ENCODE measurements at regions of chr7 and their contacts with region 1.

Region 1: GRCh38 chr7:103344453-103345149 is at the start of gene DNAJC2:
- DNase-seq: peak; percentile 80 to 85
- ATAC-seq: peak; percentile 77 to 90
- H3K4me3 ChIP-seq: peak within 1 kb of the TSS; percentile 84 to 100 (median 90)
- H3K27ac ChIP-seq: peak within 1 kb of the TSS; percentile 80 to 90 (median 86)
- H3K4me1 ChIP-seq: peaks cover 39 to 41% of the 10 kb centered on the region in 2 donors
- H3K27me3 ChIP-seq: no peaks in the 10 kb centered on the region
- CTCF ChIP-seq: no peak
- POLR2A ChIP-seq: peak; percentile 44 to 61
- total RNA-seq, gene DNAJC2: 20.9 to 36.8 (median 31.4) TPM

Region 2: DNA sequence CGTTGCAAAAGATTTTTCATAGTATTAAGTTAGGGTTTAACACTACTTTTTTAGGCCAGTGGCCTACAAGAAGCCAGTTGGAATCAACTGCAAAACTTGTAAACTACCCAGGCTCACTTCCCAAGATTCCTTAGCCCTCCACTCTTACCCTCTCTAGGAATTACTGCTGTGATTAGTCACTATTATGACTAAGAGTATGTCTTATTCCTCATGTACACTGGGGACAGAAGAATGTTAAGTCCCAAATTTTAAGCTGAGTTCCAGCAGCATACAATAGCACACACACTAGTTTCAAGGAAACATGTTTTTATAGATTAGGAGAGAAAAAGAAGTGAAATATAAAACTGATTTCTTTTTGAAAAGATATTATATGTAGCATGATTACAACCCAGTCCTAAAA is 312.8 kb before region 1 on chr7:
- in situ Hi-C with region 1: no loop called
- intact Hi-C with region 1: no loop called
- DNase-seq: no peak
- ATAC-seq: no peak
- H3K4me3 ChIP-seq: no peak overlapping the region
- H3K27ac ChIP-seq: no peak overlapping the region
- H3K4me1 ChIP-seq: no peaks in the 10 kb centered on the region
- H3K27me3 ChIP-seq: no peaks in the 10 kb centered on the region
- CTCF ChIP-seq: no peak
- POLR2A ChIP-seq: no peak

Region 3: DNA sequence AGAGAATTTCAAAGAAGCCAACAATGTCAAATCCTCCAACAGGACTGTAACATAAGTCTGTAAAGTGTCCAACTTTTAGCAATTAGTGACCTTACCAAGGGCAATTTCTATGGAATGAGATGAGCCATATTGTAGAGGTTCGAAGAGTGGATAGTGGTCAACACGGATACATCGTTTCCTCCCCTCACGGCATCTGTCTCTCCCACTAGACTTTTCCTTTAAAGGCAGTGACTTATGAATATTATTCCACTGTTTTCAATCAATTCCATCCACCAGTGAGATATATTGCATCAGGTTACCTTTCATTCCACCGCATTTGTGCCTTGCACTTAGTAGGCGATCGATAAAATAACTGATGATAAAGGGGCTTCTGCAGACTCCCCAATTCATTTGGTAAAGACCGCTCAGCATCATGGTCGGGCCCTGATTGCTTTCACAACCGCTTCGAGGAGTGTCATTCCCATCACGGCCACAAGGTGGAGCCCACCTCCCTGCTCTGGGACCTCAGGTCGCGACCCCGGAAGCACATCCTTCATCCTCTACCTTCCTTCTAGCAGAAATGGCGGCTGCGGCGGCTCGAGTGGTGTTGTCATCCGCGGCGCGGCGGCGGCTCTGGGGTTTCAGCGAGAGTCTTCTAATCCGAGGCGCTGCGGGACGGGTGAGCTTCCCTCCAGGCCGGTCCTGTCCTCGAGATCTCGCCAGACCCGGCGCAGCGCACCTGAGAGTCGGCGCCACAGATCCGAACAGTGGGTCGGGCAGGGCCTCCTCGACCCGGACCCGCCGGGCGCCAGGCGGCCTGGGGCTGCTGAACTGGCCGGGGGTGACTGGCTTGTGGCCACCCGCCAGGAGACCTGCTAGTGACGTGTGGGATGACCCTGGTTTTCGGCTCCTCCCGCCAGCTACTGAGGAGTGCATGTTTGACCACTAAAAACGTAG is 47.4 kb before region 1 on chr7 and contains the start of gene PMPCB:
- in situ Hi-C with region 1: no loop called
- intact Hi-C with region 1: loop called (anchors 2 kb)
- DNase-seq: peak; percentile 87 to 93
- ATAC-seq: peak; percentile 97 to 99
- H3K4me3 ChIP-seq: peak within 1 kb of the TSS; percentile 75 to 96 (median 88)
- H3K27ac ChIP-seq: peak within 1 kb of the TSS; percentile 76 to 87 (median 82)
- H3K4me1 ChIP-seq: peaks cover 11 to 14% of the 10 kb centered on the region in 2 donors
- H3K27me3 ChIP-seq: no peaks in the 10 kb centered on the region
- CTCF ChIP-seq: peak; percentile 94 to 98 (median 94)
- POLR2A ChIP-seq: peak in 1 of 2 donors; percentile 27
- total RNA-seq, gene PMPCB: 25.1 to 51.3 (median 40.2) TPM

Region 4: DNA sequence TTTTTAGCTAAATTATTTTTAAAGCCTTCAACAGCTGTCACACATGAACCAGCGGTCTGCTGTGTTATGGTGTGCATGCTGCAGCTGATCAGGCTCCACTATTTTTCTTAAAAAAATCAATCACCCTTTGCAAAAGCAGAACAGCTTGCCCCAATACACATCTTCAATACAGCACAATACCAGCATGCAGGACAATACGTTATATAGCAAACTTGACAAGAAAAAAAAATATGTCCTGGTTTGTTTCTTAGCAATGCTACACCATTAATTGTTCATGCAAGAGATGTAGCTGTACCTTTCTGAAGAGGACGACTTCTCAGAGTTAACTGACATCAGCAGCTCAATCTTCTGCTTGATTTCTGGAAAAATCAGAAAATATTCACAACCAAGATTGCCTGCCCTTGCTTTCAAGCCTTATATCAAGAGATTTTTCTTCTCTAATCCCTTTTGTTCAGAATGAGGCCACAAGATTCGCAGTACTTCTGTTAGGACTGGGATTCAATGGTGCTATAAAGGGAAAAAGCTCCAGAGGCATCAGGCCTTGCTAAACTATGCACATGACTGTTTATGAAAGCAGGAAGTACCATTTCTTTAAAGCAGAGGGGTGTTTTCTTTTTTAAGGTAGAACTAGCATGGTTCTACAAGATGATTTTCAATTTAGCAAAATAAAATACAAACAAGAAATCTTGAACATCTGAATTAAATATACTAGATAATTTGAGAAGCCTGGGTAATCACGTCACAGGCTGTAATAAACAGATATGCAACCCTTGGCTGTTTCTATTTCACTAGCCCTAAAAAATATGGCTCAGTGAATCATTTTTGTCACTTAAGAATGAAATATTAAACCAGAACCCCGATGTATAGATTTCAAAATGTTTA is 1924.2 kb after region 1 on chr7:
- in situ Hi-C with region 1: no loop called
- intact Hi-C with region 1: loop called (anchors 10 kb)
- DNase-seq: peak in 1 of 2 donors; percentile 22
- ATAC-seq: peak; percentile 95 to 96
- H3K4me3 ChIP-seq: peak overlapping the region; percentile 44 to 59 (median 56)
- H3K27ac ChIP-seq: peak overlapping the region; percentile 81 to 87 (median 84)
- H3K4me1 ChIP-seq: peaks cover 19 to 40% of the 10 kb centered on the region in 2 donors
- H3K27me3 ChIP-seq: no peaks in the 10 kb centered on the region
- CTCF ChIP-seq: no peak
- POLR2A ChIP-seq: peak; percentile 31 to 72